ENCODE measurements at regions of chr10 and their contacts with region 1.

Region 1: GRCh38 chr10:69087590-69088470 is at the start of gene SRGN:
- DNase-seq: peak; percentile 90
- ATAC-seq: peak; percentile 67
- H3K4me3 Mint-ChIP-seq: peak within 1 kb of the TSS; percentile 98
- H3K27ac Mint-ChIP-seq: peak within 1 kb of the TSS; percentile 99
- H3K4me1 Mint-ChIP-seq: peaks cover 48% of the 10 kb centered on the region
- H3K27me3 Mint-ChIP-seq: peaks cover 1% of the 10 kb centered on the region
- CTCF ChIP-seq: no peak
- total RNA-seq, gene SRGN: 279 to 292 TPM

Region 2: GRCh38 chr10:68955832-68956532 is 131.8 kb before region 1 on chr10 and contains the start of gene DDX21:
- CTCF ChIA-PET with region 1: interaction called, 5 read pairs
- POLR2A ChIA-PET with region 1: interaction called, 16 read pairs
- intact Hi-C with region 1: no loop called
- DNase-seq: peak; percentile 93
- ATAC-seq: peak; percentile 88
- H3K4me3 Mint-ChIP-seq: peak within 1 kb of the TSS; percentile 99
- H3K27ac Mint-ChIP-seq: peak within 1 kb of the TSS; percentile 100
- H3K4me1 Mint-ChIP-seq: peaks cover 38% of the 10 kb centered on the region
- H3K27me3 Mint-ChIP-seq: no peaks in the 10 kb centered on the region
- CTCF ChIP-seq: peak; percentile 80
- total RNA-seq, gene DDX21: 192 to 194 TPM

Region 3: GRCh38 chr10:69004821-69005220 is 83.0 kb before region 1 on chr10:
- CTCF ChIA-PET with region 1: interaction called, 97 read pairs
- POLR2A ChIA-PET with region 1: interaction called, 21 read pairs
- intact Hi-C with region 1: loop called (anchors 2 kb)
- DNase-seq: no peak
- ATAC-seq: peak; percentile 64
- H3K4me3 Mint-ChIP-seq: no peak overlapping the region
- H3K27ac Mint-ChIP-seq: no peak overlapping the region
- H3K4me1 Mint-ChIP-seq: peaks cover 9% of the 10 kb centered on the region
- H3K27me3 Mint-ChIP-seq: no peaks in the 10 kb centered on the region
- CTCF ChIP-seq: peak; percentile 78

Region 4: GRCh38 chr10:69051303-69051702 is 36.5 kb before region 1 on chr10:
- CTCF ChIA-PET with region 1: interaction called, 13 read pairs
- POLR2A ChIA-PET with region 1: interaction called, 77 read pairs
- intact Hi-C with region 1: no loop called
- DNase-seq: peak; percentile 84
- ATAC-seq: peak; percentile 55
- H3K4me3 Mint-ChIP-seq: no peak overlapping the region
- H3K27ac Mint-ChIP-seq: peak overlapping the region; percentile 14
- H3K4me1 Mint-ChIP-seq: peaks cover 48% of the 10 kb centered on the region
- H3K27me3 Mint-ChIP-seq: no peaks in the 10 kb centered on the region
- CTCF ChIP-seq: no peak

Region 5: GRCh38 chr10:69073026-69073425 is 14.8 kb before region 1 on chr10:
- CTCF ChIA-PET with region 1: interaction called, 3 read pairs
- POLR2A ChIA-PET with region 1: interaction called, 15 read pairs
- intact Hi-C with region 1: no loop called
- DNase-seq: no peak
- ATAC-seq: no peak
- H3K4me3 Mint-ChIP-seq: no peak overlapping the region
- H3K27ac Mint-ChIP-seq: no peak overlapping the region
- H3K4me1 Mint-ChIP-seq: peaks cover 12% of the 10 kb centered on the region
- H3K27me3 Mint-ChIP-seq: no peaks in the 10 kb centered on the region
- CTCF ChIP-seq: no peak

Region 6: GRCh38 chr10:69215405-69216176 is 127.8 kb after region 1 on chr10:
- CTCF ChIA-PET with region 1: no interaction called
- POLR2A ChIA-PET with region 1: no interaction called
- intact Hi-C with region 1: no loop called
- DNase-seq: peak; percentile 53
- ATAC-seq: peak; percentile 80
- H3K4me3 Mint-ChIP-seq: peak overlapping the region; percentile 4
- H3K27ac Mint-ChIP-seq: no peak overlapping the region
- H3K4me1 Mint-ChIP-seq: peaks cover 20% of the 10 kb centered on the region
- H3K27me3 Mint-ChIP-seq: no peaks in the 10 kb centered on the region
- CTCF ChIP-seq: no peak